Calu3 (cell line): ENCODE measurements at regions of chr3 and their contacts with region 1.

Region 1: DNA sequence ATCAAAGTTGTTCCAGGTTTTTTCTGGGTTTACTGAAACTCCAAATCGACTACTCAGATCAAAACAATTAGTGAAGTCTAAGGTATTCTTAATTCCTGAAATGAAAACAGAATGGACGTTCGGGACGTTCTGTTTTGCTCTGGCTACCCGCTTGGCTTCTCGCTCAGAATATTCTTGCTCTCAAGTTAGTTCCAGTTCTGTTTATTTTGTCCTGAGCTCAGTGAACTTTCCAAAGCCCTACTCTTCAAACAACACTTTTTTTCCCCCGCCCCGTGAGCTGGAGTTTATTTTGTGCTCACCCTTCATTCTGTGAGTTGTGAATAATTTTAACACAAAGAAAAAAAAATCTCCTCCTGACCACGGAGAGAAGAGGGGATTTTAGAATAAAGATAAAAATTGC is 72.6 kb downstream of the SAMMSON start:
- DNase-seq: no peak
- H3K4me3 Mint-ChIP-seq: no peak overlapping the region
- H3K27ac Mint-ChIP-seq: no peak overlapping the region
- H3K4me1 Mint-ChIP-seq: no peaks in the 10 kb centered on the region
- H3K27me3 Mint-ChIP-seq: peaks cover 71% of the 10 kb centered on the region
- CTCF ChIP-seq: no peak

Region 2: GRCh38 chr3:70488131-70488530 is 416.0 kb after region 1 on chr3:
- CTCF ChIA-PET with region 1: no interaction called
- intact Hi-C with region 1: no loop called
- DNase-seq: no peak
- H3K4me3 Mint-ChIP-seq: no peak overlapping the region
- H3K27ac Mint-ChIP-seq: no peak overlapping the region
- H3K4me1 Mint-ChIP-seq: no peaks in the 10 kb centered on the region
- H3K27me3 Mint-ChIP-seq: peaks cover 20% of the 10 kb centered on the region
- CTCF ChIP-seq: no peak

Region 3: GRCh38 chr3:71177375-71177774 is 1105.2 kb after region 1 on chr3:
- CTCF ChIA-PET with region 1: interaction called, 11 read pairs
- intact Hi-C with region 1: no loop called
- DNase-seq: no peak
- H3K4me3 Mint-ChIP-seq: no peak overlapping the region
- H3K27ac Mint-ChIP-seq: no peak overlapping the region
- H3K4me1 Mint-ChIP-seq: no peaks in the 10 kb centered on the region
- H3K27me3 Mint-ChIP-seq: no peaks in the 10 kb centered on the region
- CTCF ChIP-seq: no peak